ENCODE measurements at regions of chr11 and their contacts with region 1.

Region 1: DNA sequence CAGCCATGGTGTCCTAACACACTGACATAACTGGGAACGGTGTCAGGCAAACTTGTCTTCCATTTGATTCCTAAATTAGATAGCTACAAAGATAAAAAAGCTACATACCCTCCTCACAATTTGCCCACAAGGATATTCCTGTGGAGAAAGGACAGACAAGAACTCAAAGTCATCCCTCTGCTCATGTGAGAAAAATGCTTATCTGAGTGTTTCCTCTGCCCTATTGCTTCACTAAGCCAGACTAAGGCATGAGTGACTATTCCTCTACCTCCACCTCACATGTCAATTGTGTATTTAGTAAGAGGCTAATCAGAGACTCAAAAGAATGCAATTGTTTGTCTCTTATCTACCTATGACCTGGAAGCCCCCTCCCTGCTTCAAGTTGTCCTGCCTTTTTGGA is 247.7 kb downstream of the DDX10 start:
- DNase-seq: peak; percentile 35 to 68
- H3K4me3 ChIP-seq: no peak overlapping the region
- H3K4me3 Mint-ChIP-seq: peak overlapping the region; percentile 12
- H3K27ac Mint-ChIP-seq: peak overlapping the region; percentile 70
- H3K4me1 ChIP-seq: peaks cover 23% of the 10 kb centered on the region
- H3K4me1 Mint-ChIP-seq: peaks cover 23% of the 10 kb centered on the region
- H3K27me3 ChIP-seq: no peaks in the 10 kb centered on the region
- H3K27me3 Mint-ChIP-seq: no peaks in the 10 kb centered on the region
- CTCF ChIP-seq: no peak

Region 2: DNA sequence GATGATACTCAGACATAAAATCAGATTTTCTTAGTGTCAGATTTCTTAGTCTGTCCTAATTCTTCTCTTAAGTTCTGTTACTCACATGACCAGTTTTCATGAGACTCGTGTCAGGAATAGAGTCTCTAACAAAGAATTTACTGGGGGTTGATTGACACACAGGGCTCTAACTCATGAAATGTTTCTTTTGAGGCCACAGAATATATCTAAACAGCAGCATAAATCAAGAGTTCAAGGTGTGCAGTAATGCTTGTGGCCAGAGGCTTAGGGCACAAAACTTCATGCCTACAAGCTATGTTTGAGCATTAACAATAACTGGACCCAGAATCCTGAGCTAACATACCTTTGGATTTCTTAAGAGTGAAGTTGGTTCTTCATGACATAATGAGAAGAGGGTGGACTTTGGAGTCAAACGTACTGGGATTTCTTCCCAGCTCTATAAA is 10.5 kb before region 1 on chr11:
- CTCF ChIA-PET with region 1: interaction called, 3 read pairs
- POLR2A ChIA-PET with region 1: interaction called, 3 read pairs
- intact Hi-C with region 1: loop called (anchors 1 kb)
- DNase-seq: peak; percentile 43 to 63
- H3K4me3 ChIP-seq: no peak overlapping the region
- H3K4me3 Mint-ChIP-seq: peak overlapping the region; percentile 32
- H3K27ac Mint-ChIP-seq: no peak overlapping the region
- H3K4me1 ChIP-seq: peaks cover 21% of the 10 kb centered on the region
- H3K4me1 Mint-ChIP-seq: peaks cover 9% of the 10 kb centered on the region
- H3K27me3 ChIP-seq: no peaks in the 10 kb centered on the region
- H3K27me3 Mint-ChIP-seq: no peaks in the 10 kb centered on the region
- CTCF ChIP-seq: no peak

Region 3: GRCh38 chr11:108975641-108976071 is 63.1 kb after region 1 on chr11:
- CTCF ChIA-PET with region 1: no interaction called
- POLR2A ChIA-PET with region 1: no interaction called
- intact Hi-C with region 1: loop called (anchors 1 kb)
- DNase-seq: no peak
- H3K4me3 ChIP-seq: no peak overlapping the region
- H3K4me3 Mint-ChIP-seq: no peak overlapping the region
- H3K27ac Mint-ChIP-seq: no peak overlapping the region
- H3K4me1 ChIP-seq: no peaks in the 10 kb centered on the region
- H3K4me1 Mint-ChIP-seq: peaks cover 8% of the 10 kb centered on the region
- H3K27me3 ChIP-seq: no peaks in the 10 kb centered on the region
- H3K27me3 Mint-ChIP-seq: no peaks in the 10 kb centered on the region
- CTCF ChIP-seq: no peak

Region 4: DNA sequence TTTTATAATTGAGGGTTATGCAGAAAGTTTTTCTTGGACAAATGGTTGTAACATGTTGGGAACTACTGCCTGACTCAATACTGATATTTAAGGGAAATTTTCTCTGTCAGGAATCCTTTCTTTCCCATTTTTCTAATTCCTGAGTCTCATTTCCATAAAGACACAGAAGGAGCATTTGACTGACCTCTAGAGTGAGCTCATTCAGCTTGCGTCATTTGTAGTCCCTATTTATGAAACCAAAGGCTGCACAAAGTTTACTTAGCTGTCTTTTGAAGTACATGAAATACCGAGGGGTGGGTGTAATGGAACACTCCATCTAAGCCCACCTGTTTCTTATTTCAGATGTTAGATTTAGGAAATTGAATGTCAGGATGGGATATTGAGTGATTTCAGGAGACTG is 149.9 kb after region 1 on chr11:
- CTCF ChIA-PET with region 1: no interaction called
- POLR2A ChIA-PET with region 1: no interaction called
- intact Hi-C with region 1: no loop called
- DNase-seq: no peak
- H3K4me3 ChIP-seq: no peak overlapping the region
- H3K4me3 Mint-ChIP-seq: no peak overlapping the region
- H3K27ac Mint-ChIP-seq: no peak overlapping the region
- H3K4me1 ChIP-seq: peaks cover 24% of the 10 kb centered on the region
- H3K4me1 Mint-ChIP-seq: peaks cover 25% of the 10 kb centered on the region
- H3K27me3 ChIP-seq: no peaks in the 10 kb centered on the region
- H3K27me3 Mint-ChIP-seq: no peaks in the 10 kb centered on the region
- CTCF ChIP-seq: no peak

Measured in Caco-2 (cell line).